ENCODE measurements at regions of chr9 and their contacts with region 1.

Region 1: GRCh38 chr9:19306568-19306967 is 73.5 kb downstream of the RPS6 start:
- DNase-seq: no peak
- ATAC-seq: no peak
- H3K4me3 ChIP-seq: no peak overlapping the region
- H3K4me3 Mint-ChIP-seq: no peak overlapping the region
- H3K27ac ChIP-seq: no peak overlapping the region
- H3K27ac Mint-ChIP-seq: no peak overlapping the region
- H3K4me1 ChIP-seq: no peaks in the 10 kb centered on the region
- H3K4me1 Mint-ChIP-seq: peaks cover 0 to 10% (median 0%) of the 10 kb centered on the region in 7 donors
- H3K27me3 ChIP-seq: no peaks in the 10 kb centered on the region
- H3K27me3 Mint-ChIP-seq: no peaks in the 10 kb centered on the region

Region 2: DNA sequence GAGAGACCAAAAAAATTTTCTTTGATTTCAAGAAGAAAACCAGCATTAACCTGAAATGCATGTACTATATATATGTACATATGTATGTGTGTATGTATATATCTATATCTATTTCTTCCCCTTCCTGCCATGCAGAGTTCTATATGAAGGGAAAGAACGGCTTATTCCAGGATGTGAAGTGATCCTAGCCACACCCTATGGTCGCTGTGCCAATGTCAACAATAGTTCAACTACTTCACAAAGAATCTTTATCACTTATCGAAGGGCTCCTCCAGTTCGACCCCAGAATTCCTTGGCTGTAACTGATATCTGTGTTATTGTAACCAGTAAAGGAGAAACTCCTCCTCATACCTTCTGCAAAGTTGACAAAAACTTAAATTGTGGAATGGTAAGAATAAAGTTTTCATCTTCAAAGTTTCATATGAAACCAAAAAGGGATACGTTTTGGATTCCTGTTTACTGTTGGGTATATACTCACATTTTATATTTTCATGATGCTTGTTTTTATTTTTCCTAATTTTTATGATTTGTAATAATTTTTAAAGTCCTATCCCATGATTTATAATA is 19.9 kb before region 1 on chr9:
- CTCF ChIA-PET with region 1: no interaction called
- POLR2A ChIA-PET with region 1: no interaction called
- intact Hi-C with region 1: loop called in 1 of 2 experiments (anchors 2 kb)
- DNase-seq: no peak
- ATAC-seq: no peak
- H3K4me3 ChIP-seq: no peak overlapping the region
- H3K4me3 Mint-ChIP-seq: no peak overlapping the region
- H3K27ac ChIP-seq: no peak overlapping the region
- H3K27ac Mint-ChIP-seq: no peak overlapping the region
- H3K4me1 ChIP-seq: no peaks in the 10 kb centered on the region
- H3K4me1 Mint-ChIP-seq: peaks cover 7 to 48% (median 35%) of the 10 kb centered on the region in 7 donors
- H3K27me3 ChIP-seq: no peaks in the 10 kb centered on the region
- H3K27me3 Mint-ChIP-seq: no peaks in the 10 kb centered on the region

Measured in naive thymus-derived CD4-positive, alpha-beta T cell (primary cell).